Activated CD8-positive, alpha-beta T cell treated with anti-CD3 and anti-CD28 coated beads, Interleukin-2, amount 10 ng/mL, durations not matched to agents 7 days and 5 days (primary cell): ENCODE measurements at regions of chr1 and their contacts with region 1.

Region 1: GRCh38 chr1:101238681-101239094 is 1.9 kb downstream of the S1PR1 start:
- DNase-seq: peak; percentile 92
- ATAC-seq: peak; percentile 53
- H3K4me3 Mint-ChIP-seq: peak overlapping the region; percentile 98
- H3K27ac Mint-ChIP-seq: peak overlapping the region; percentile 95
- H3K4me1 Mint-ChIP-seq: peaks cover 69% of the 10 kb centered on the region
- H3K27me3 Mint-ChIP-seq: no peaks in the 10 kb centered on the region

Region 2: GRCh38 chr1:100921109-100921706 is 317.5 kb before region 1 on chr1:
- CTCF ChIA-PET with region 1: interaction called, 13 read pairs
- POLR2A ChIA-PET with region 1: interaction called, 7 read pairs
- DNase-seq: no peak
- ATAC-seq: no peak
- H3K4me3 Mint-ChIP-seq: no peak overlapping the region
- H3K27ac Mint-ChIP-seq: no peak overlapping the region
- H3K4me1 Mint-ChIP-seq: peaks cover 26% of the 10 kb centered on the region
- H3K27me3 Mint-ChIP-seq: no peaks in the 10 kb centered on the region

Region 3: DNA sequence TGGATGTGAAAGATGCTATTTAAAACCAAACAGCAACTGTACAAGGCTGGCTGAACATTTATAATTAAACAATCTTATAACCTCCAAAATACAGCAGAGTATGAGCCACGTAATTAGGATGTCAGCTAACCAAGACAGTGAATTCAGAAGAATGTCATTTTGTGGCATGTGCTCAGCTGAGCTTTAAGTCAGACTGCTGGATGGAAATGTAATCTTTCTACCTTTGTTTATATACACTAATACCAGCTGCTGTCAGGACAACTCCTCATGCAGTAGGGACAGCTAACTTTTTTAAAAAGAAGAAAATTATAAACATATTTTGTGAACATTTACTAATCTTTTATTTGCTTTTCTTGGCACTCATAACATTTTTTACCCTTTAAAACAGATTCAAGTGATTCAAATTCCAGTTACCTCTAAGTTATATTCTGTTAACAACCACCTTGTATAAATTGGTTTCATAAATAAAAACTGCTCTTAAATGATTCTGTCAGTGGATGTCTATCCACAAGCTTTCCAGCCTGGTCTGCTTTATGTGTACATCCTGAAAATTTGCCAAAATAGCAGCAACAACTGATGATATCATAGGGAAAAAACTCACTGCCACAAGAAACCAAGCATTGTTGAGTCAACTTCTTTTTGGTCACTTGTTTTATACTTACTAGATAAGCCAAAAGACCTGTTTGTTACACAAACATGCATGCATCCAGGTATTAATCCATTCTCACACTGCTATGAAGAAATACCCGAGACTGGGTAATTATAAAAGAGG is 249.2 kb before region 1 on chr1:
- CTCF ChIA-PET with region 1: no interaction called
- POLR2A ChIA-PET with region 1: no interaction called
- DNase-seq: no peak
- ATAC-seq: no peak
- H3K4me3 Mint-ChIP-seq: no peak overlapping the region
- H3K27ac Mint-ChIP-seq: no peak overlapping the region
- H3K4me1 Mint-ChIP-seq: peaks cover 2% of the 10 kb centered on the region
- H3K27me3 Mint-ChIP-seq: no peaks in the 10 kb centered on the region

Region 4: GRCh38 chr1:101025657-101026504 is 212.8 kb before region 1 on chr1 and contains the start of gene DPH5:
- CTCF ChIA-PET with region 1: interaction called, 20 read pairs
- POLR2A ChIA-PET with region 1: interaction called, 11 read pairs
- DNase-seq: peak; percentile 93
- ATAC-seq: peak; percentile 96
- H3K4me3 Mint-ChIP-seq: peak within 1 kb of the TSS; percentile 99
- H3K27ac Mint-ChIP-seq: peak within 1 kb of the TSS; percentile 96
- H3K4me1 Mint-ChIP-seq: peaks cover 56% of the 10 kb centered on the region
- H3K27me3 Mint-ChIP-seq: no peaks in the 10 kb centered on the region
- total RNA-seq, gene DPH5: 37.8 to 41.7 TPM

Region 5: DNA sequence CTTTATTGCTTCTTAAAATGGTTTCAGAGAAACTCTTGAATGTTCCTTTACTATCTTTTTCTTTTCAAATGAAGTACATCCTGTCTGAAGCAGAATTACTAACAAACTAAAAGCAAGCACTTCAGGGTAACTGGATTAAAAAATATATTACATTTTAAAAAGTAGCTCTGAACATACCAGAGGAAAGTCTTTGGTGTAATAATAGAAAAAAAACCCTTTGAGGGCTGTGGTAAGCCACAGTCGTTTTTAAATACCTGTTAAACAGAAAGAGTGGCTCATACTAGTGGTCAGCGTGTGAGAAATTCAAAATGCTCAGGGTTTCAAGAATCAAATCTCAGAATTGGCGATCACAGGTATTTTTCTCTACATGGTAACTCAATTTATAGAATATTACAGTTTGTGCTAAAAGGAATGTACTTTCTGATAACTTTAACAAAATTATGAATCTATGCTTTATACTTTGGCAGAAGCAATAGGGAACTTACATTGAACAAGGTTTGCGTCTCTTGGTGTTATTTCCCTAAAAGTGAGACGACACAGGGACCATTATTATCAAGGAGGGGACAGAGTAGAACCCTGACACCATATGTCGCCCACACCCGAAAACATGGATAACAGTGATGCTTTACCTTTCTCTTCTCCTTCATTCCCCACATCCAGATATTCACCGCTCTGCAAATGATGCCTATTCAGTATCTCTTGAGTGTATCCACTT is 116.1 kb before region 1 on chr1:
- CTCF ChIA-PET with region 1: interaction called, 17 read pairs
- POLR2A ChIA-PET with region 1: interaction called, 9 read pairs
- DNase-seq: peak; percentile 78
- ATAC-seq: peak; percentile 65
- H3K4me3 Mint-ChIP-seq: peak overlapping the region; percentile 50
- H3K27ac Mint-ChIP-seq: peak overlapping the region; percentile 82
- H3K4me1 Mint-ChIP-seq: peaks cover 71% of the 10 kb centered on the region
- H3K27me3 Mint-ChIP-seq: no peaks in the 10 kb centered on the region

Region 6: GRCh38 chr1:101145449-101145820 is 93.3 kb before region 1 on chr1:
- CTCF ChIA-PET with region 1: interaction called, 165 read pairs
- POLR2A ChIA-PET with region 1: interaction called, 3 read pairs
- DNase-seq: no peak
- ATAC-seq: no peak
- H3K4me3 Mint-ChIP-seq: no peak overlapping the region
- H3K27ac Mint-ChIP-seq: no peak overlapping the region
- H3K4me1 Mint-ChIP-seq: peaks cover 17% of the 10 kb centered on the region
- H3K27me3 Mint-ChIP-seq: no peaks in the 10 kb centered on the region

Region 7: GRCh38 chr1:101257500-101258325 is 19.0 kb after region 1 on chr1:
- CTCF ChIA-PET with region 1: interaction called, 12 read pairs
- POLR2A ChIA-PET with region 1: interaction called, 14 read pairs
- DNase-seq: peak; percentile 74
- ATAC-seq: peak; percentile 80
- H3K4me3 Mint-ChIP-seq: peak overlapping the region; percentile 10
- H3K27ac Mint-ChIP-seq: peak overlapping the region; percentile 71
- H3K4me1 Mint-ChIP-seq: peaks cover 55% of the 10 kb centered on the region
- H3K27me3 Mint-ChIP-seq: no peaks in the 10 kb centered on the region